Spleen (tissue), 13 donors: ENCODE measurements at regions of chr3 and their contacts with region 1.

Region 1: GRCh38 chr3:45224824-45225464 is 1.1 kb downstream of the TMEM158 start:
- DNase-seq: peak; percentile 87
- H3K4me3 ChIP-seq: peak overlapping the region; percentile 12 to 78 (median 51)
- H3K27ac ChIP-seq: no peak overlapping the region
- H3K4me1 ChIP-seq: peaks cover 4 to 19% (median 13%) of the 10 kb centered on the region in 6 donors
- H3K27me3 ChIP-seq: peaks cover 3 to 97% (median 46%) of the 10 kb centered on the region in 7 donors
- CTCF ChIP-seq: peak in 7 of 11 experiments; percentile 20 to 57 (median 42)
- POLR2A ChIP-seq: no peak

Region 2: DNA sequence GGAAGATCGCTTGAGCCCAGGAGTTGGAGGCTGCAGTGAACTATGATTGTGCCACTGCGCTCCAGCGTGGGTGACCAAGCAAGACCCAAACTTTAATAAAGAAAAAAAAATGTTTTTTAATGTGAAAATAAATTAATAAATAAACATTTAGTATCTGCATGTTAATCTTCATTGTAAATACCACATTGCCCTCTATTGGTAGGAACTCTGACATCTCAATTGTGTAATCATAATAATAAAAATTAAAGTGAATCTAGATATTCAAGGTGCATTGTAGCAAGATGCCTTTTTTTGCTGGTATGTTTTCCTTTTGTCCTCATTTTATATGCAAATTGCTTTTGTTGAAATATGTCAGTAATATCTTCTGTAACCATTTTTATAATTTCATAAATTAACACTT is 274.6 kb after region 1 on chr3:
- intact Hi-C with region 1: loop called (anchors 5 kb)
- DNase-seq: no peak
- H3K4me3 ChIP-seq: no peak overlapping the region
- H3K27ac ChIP-seq: no peak overlapping the region
- H3K4me1 ChIP-seq: peaks cover 0 to 21% (median 13%) of the 10 kb centered on the region in 6 donors
- H3K27me3 ChIP-seq: no peaks in the 10 kb centered on the region
- CTCF ChIP-seq: peak in 7 of 11 experiments; percentile 14 to 39 (median 29)
- POLR2A ChIP-seq: no peak